HEK293 (cell line): ENCODE measurements at regions of chr1 and their contacts with region 1.

Region 1: DNA sequence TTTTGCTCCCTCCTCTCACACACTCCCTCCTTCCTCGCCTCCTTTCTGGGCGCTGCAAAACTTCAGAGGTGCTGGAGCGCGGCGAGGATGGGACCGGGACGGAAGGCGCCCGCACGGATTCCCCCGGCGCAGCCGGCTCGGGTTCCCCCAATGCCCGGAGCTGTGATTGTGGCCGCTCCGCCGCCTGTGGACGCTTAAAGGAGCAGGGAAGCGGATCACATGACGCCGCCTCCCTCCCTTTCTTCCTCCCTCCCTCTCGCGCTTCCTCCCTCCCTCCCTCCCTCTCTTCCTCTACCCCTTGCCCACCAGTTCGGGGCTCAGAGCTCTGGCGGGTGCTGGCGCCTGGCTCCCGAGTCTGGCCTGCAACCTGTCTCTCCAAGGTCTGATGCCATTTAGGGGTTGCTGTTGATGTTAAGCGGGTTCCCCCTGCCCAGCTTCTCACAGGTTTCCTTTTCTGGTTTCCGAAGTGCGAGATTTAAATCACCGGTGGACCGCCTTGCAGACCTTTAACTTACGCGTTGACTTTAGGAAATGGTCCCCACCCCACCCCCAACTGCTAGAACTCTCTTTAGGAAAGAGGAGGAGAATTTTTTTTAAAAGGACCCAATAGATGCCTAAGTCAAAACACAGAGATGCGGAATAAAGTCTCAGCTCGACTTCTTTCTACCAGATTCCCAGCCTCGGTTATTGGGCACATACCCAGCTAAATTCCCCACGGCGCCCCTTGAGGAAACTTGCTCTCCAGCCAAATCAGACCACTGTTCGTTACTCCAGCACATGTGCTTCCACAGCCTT is at the start of gene WLS:
- H3K4me3 ChIP-seq: peak within 1 kb of the TSS; percentile 79
- H3K27ac ChIP-seq: peak within 1 kb of the TSS; percentile 93
- H3K4me1 ChIP-seq: peaks cover 11% of the 10 kb centered on the region
- CTCF ChIP-seq: 0 out of 2 replicates have a peak, but pooled peaks have one; percentile 15

Region 2: GRCh38 chr1:68173911-68174737 is 58.4 kb before region 1 on chr1:
- CTCF ChIA-PET with region 1: no interaction called
- POLR2A ChIA-PET with region 1: interaction called, 10 read pairs
- H3K4me3 ChIP-seq: no peak overlapping the region
- H3K27ac ChIP-seq: peak overlapping the region; percentile 46
- H3K4me1 ChIP-seq: peaks cover 34% of the 10 kb centered on the region
- CTCF ChIP-seq: no peak

Region 3: DNA sequence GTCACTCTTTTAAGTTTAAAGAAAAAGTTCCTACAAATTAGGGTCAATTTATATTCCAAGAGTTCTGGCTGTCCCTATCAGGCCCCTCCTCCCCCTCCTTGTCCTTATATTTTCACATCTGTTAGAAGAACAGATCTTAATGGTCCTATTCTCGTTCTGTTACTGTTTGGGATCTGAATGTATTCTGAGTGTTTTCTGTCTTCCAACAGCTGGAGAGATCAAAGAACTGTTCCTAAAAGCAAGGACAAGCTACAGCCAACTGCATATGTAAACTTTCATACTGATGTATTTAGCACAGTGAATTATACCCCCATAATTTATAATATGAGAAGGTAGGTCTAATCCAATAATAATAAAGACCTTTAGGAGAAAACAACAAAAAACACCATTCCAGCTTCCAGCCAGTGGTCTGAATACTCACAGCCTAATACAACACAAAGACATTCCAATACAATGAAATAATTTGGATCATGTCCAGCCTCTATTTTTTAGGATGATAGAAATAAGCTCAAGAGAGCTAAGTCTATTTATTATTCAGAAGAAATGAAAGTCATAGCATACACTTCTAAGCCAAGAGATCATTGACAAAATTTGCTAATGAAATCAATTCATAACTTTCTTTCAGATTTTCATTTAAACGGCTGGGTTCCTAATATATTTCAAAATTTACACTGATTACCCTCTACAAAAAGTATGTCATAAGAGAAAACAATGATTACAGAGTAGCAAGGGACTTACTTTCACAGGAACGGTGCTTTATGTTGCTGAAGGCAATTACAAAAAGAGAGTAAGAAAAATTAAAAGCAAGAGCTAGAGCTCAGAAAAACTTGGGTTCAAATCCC is 25.5 kb before region 1 on chr1:
- CTCF ChIA-PET with region 1: no interaction called
- POLR2A ChIA-PET with region 1: interaction called, 12 read pairs
- H3K4me3 ChIP-seq: no peak overlapping the region
- H3K27ac ChIP-seq: no peak overlapping the region
- H3K4me1 ChIP-seq: peaks cover 35% of the 10 kb centered on the region
- CTCF ChIP-seq: no peak

Region 4: DNA sequence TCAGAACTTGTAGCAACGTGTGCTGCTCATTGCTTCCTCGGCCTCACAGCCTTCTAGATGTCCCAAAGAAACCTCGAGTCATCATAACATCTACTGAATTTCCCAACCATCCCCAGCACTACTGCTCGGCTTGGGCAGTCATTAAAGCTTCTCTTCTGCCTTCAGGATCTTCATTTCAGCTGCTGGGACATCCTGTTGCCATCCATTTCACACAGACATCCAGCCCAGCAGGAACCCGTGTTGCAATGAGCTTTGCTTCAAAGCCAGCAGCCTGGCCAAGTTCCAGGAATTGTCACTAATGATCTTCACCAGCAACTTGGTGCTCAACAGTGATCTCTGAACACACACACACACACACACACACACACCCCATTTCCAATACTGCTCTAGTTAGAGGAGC is 18.7 kb before region 1 on chr1:
- CTCF ChIA-PET with region 1: interaction called, 3 read pairs
- POLR2A ChIA-PET with region 1: interaction called, 57 read pairs
- H3K4me3 ChIP-seq: no peak overlapping the region
- H3K27ac ChIP-seq: peak overlapping the region; percentile 64
- H3K4me1 ChIP-seq: peaks cover 62% of the 10 kb centered on the region
- CTCF ChIP-seq: no peak

Region 5: GRCh38 chr1:68221621-68222373 is 10.8 kb before region 1 on chr1:
- CTCF ChIA-PET with region 1: interaction called, 3 read pairs
- POLR2A ChIA-PET with region 1: interaction called, 57 read pairs
- H3K4me3 ChIP-seq: no peak overlapping the region
- H3K27ac ChIP-seq: no peak overlapping the region
- H3K4me1 ChIP-seq: peaks cover 37% of the 10 kb centered on the region
- CTCF ChIP-seq: no peak

Region 6: GRCh38 chr1:68321084-68321685 is 88.6 kb after region 1 on chr1:
- CTCF ChIA-PET with region 1: interaction called, 11 read pairs
- POLR2A ChIA-PET with region 1: interaction called, 3 read pairs
- H3K4me3 ChIP-seq: no peak overlapping the region
- H3K27ac ChIP-seq: no peak overlapping the region
- H3K4me1 ChIP-seq: no peaks in the 10 kb centered on the region
- CTCF ChIP-seq: peak; percentile 40; the same call in 1 of the 2 replicates

Region 7: GRCh38 chr1:68346188-68346808 is 113.7 kb after region 1 on chr1:
- CTCF ChIA-PET with region 1: interaction called, 13 read pairs
- POLR2A ChIA-PET with region 1: interaction called, 9 read pairs
- H3K4me3 ChIP-seq: no peak overlapping the region
- H3K27ac ChIP-seq: no peak overlapping the region
- H3K4me1 ChIP-seq: no peaks in the 10 kb centered on the region
- CTCF ChIP-seq: no peak

Region 8: GRCh38 chr1:68651115-68651514 is 418.6 kb after region 1 on chr1:
- CTCF ChIA-PET with region 1: no interaction called
- POLR2A ChIA-PET with region 1: no interaction called
- H3K4me3 ChIP-seq: no peak overlapping the region
- H3K27ac ChIP-seq: no peak overlapping the region
- H3K4me1 ChIP-seq: no peaks in the 10 kb centered on the region
- CTCF ChIP-seq: no peak